SK-N-SH (cell line): ENCODE measurements at regions of chr3 and their contacts with region 1.

Region 1: GRCh38 chr3:51682079-51682478 is 11.0 kb downstream of the TEX264 start:
- DNase-seq: peak; percentile 92
- H3K4me3 ChIP-seq: no peak overlapping the region
- H3K27ac ChIP-seq: peak overlapping the region; percentile 36 to 75; a peak in 3 of 4 replicates
- H3K4me1 ChIP-seq: peaks cover 4 to 11% of the 10 kb centered on the region in 2 experiments; a peak in 2 of 4 replicates
- H3K27me3 ChIP-seq: no peaks in the 10 kb centered on the region
- CTCF ChIP-seq: peak; percentile 79
- EP300 ChIP-seq: peak in 1 of 2 experiments; percentile 56; a peak in 2 of 4 replicates
- RAD21 ChIP-seq: peak; percentile 96

Region 2: DNA sequence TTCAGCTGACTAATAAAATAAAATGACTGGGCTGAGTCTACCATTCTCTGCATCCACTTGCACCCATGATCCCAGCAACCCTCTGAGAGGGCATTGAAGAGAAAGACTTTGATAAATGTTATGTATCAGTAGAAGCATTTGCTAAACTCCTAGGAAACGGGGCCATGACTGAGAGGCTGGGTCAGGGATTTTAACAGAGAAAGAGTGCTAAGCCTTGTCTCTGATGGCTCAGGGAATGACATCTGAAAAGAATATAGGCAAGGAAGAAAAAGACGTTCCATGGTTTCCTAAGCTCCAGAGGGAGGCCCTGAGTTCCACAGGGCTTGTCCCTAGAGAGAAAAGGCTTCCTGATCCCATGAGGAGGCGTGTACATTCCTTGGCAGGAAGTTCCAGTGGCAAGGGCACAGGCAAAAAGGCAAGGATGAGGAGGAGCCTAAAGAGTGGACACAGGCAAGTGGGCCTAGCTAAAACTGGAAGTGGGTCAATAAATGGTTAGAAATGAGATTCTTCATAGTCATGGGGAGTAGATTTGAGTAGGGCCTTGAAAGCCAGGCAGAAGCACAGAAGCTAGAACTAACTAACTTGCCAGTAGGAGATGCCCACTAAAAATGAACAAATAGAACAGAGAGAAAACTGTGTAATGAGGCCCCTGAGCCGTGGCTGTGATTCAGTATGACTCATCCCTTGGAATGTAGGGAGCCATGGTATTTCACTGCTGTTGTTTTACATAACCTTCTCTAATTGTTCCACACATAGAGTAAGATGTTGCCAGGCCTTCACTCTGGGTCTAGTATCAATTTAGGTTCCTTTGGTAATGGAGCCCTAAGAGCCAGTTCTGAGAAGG is 341.8 kb before region 1 on chr3:
- CTCF ChIA-PET with region 1: no interaction called
- POLR2A ChIA-PET with region 1: no interaction called
- DNase-seq: no peak
- H3K4me3 ChIP-seq: no peak overlapping the region
- H3K27ac ChIP-seq: peak overlapping the region; percentile 72 to 89; a peak in 3 of 4 replicates
- H3K4me1 ChIP-seq: peaks cover 0 to 15% of the 10 kb centered on the region in 2 experiments; a peak in 2 of 4 replicates
- H3K27me3 ChIP-seq: no peaks in the 10 kb centered on the region; the same call in 1 of the 2 replicates
- CTCF ChIP-seq: no peak
- EP300 ChIP-seq: no peak
- RAD21 ChIP-seq: no peak

Region 3: DNA sequence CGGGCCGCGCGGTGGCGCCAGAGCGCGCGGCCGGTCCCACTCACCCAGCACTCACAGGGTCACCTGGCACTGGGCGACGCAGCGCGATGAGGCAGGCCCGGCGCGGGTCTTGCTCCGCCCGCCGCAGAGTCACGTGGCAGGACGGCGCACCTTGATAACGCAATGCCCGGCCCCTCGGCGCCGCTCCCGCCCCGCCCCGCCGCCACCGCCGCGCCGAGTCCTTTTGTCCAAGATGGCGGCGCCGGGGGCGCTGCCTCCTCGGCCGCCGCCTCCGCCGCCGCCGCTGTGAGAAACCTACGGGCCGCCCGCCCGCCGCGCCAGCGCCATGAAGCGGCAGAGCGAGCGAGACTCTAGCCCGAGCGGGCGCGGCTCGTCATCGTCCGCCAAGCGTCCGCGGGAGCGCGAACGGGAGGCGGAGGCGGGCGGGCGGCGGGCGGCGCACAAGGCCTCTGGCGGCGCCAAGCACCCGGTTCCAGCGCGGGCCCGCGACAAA is 291.0 kb before region 1 on chr3 and contains the start of gene RBM15B:
- CTCF ChIA-PET with region 1: interaction called, 27 read pairs
- POLR2A ChIA-PET with region 1: no interaction called
- DNase-seq: peak; percentile 98
- H3K4me3 ChIP-seq: peak within 1 kb of the TSS; percentile 76 to 89
- H3K27ac ChIP-seq: peak within 1 kb of the TSS; percentile 53 to 81
- H3K4me1 ChIP-seq: peaks cover 27 to 76% of the 10 kb centered on the region in 2 experiments
- H3K27me3 ChIP-seq: no peaks in the 10 kb centered on the region
- CTCF ChIP-seq: no peak; the same call in 1 of the 2 replicates
- EP300 ChIP-seq: peak in 1 of 2 experiments; percentile 8; a peak in 1 of 4 replicates
- RAD21 ChIP-seq: peak; percentile 54
- polyA plus RNA-seq, gene RBM15B: 11.3 and 17.0 TPM in 2 replicates

Region 4: DNA sequence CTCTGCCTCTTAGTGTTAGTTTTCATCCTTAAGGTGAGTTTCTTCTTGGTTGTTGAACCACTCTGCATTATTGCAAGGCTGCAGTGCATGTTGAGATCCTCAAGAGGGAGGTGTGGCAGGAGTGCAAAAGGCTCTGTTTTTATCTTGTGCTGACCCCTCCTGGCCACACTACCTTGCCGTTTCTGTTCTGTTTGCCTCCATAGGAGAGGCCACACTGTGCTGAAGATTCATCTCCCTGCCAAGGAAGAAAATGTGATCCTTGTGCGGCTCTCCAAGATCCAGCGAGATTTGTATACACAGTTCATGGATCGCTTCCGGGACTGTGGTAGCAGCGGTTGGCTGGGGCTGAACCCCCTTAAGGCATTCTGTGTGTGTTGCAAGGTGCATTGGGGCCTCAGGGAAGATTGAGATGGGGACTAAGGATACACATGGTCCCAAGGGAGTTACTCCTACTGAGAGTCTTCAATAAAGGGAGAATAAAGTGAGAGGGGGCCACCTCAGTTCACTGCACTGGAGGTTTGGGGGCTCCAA is 44.1 kb before region 1 on chr3:
- CTCF ChIA-PET with region 1: interaction called, 32 read pairs
- POLR2A ChIA-PET with region 1: no interaction called
- DNase-seq: peak; percentile 68
- H3K4me3 ChIP-seq: no peak overlapping the region; a peak in 1 of 4 replicates
- H3K27ac ChIP-seq: no peak overlapping the region
- H3K4me1 ChIP-seq: no peaks in the 10 kb centered on the region
- H3K27me3 ChIP-seq: no peaks in the 10 kb centered on the region
- CTCF ChIP-seq: peak; percentile 85
- EP300 ChIP-seq: no peak
- RAD21 ChIP-seq: peak; percentile 88

Region 5: DNA sequence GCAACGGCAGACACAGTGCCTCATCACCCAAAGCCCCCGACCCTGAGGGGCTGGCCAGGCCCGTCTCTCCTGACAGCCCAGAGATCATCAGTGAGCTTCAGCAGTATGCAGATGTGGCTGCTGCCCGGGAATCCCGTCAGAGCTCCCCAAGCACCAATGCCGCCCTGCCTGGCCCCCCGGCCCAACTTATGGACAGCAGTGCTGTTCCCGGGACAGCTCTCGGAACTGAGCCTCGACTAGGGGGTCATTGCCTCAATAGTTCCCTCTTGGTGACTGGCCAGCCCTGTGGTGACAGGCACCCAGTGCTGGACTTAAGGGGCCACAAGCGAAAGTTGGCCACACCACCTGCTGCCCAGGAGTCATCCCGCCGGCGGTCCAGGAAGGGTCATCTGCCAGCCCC is 19.6 kb before region 1 on chr3:
- CTCF ChIA-PET with region 1: interaction called, 17 read pairs
- POLR2A ChIA-PET with region 1: no interaction called
- DNase-seq: no peak
- H3K4me3 ChIP-seq: no peak overlapping the region
- H3K27ac ChIP-seq: no peak overlapping the region
- H3K4me1 ChIP-seq: no peaks in the 10 kb centered on the region
- H3K27me3 ChIP-seq: no peaks in the 10 kb centered on the region
- CTCF ChIP-seq: no peak
- EP300 ChIP-seq: no peak
- RAD21 ChIP-seq: no peak

Region 6: DNA sequence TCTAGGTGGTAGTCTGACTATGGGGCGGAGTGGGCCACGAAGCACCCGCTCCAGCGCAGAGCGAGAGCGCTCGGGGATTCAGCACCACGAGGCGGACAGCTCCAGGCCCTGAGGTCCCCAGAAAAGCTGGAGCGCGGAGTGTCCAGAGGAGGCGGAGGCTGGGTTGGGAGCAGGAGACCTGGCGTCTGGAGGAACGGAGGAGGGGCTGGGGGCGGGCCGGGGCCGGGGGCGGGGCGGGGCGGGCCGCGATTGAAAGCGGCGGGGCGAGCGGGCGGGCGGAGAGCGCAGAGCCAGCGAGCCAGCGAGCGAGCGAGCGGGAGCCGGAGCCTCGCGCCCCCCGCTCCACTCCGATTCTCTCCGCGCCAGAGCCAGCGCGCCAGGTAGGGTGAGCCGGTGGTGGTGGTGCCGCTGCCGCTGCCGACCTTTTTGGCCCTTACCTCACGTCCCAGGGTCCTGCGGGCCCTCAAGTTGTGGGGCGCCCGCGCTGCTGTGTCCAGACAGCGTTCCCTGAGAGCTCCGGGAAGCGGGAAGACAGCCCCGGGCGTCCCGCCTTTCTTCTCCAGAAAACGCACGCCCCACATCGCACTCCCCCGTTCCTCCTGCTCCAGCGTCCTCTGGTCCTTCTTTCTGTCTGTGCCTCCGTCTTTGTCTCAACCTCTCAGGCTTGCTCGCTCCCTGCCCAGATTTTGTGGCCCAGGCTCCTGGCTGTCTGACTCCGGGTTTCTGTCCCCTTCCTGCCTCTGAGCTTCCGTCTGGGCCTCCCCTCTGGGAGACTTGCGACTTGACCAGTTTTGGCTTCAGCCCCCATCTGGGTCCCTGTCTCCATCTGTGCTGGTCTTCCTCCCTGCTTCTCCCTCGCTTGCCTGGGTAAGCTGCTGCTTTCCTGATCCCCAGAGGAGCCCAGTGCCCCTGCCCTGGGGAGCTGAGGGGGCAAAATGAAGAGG is 25.0 kb after region 1 on chr3 and contains the start of gene GRM2:
- CTCF ChIA-PET with region 1: interaction called, 27 read pairs
- POLR2A ChIA-PET with region 1: no interaction called
- DNase-seq: peak; percentile 97
- H3K4me3 ChIP-seq: peak within 1 kb of the TSS in 1 of 2 experiments; percentile 43; a peak in 3 of 4 replicates
- H3K27ac ChIP-seq: no peak within 1 kb of the TSS
- H3K4me1 ChIP-seq: peaks cover 0 to 28% of the 10 kb centered on the region in 2 experiments; a peak in 1 of 4 replicates
- H3K27me3 ChIP-seq: no peaks in the 10 kb centered on the region
- CTCF ChIP-seq: no peak
- EP300 ChIP-seq: no peak
- RAD21 ChIP-seq: no peak
- polyA plus RNA-seq, gene GRM2: 0.15 and 0.24 TPM in 2 replicates